Caco-2 (cell line): ENCODE measurements at regions of chr9 and their contacts with region 1.

Region 1: DNA sequence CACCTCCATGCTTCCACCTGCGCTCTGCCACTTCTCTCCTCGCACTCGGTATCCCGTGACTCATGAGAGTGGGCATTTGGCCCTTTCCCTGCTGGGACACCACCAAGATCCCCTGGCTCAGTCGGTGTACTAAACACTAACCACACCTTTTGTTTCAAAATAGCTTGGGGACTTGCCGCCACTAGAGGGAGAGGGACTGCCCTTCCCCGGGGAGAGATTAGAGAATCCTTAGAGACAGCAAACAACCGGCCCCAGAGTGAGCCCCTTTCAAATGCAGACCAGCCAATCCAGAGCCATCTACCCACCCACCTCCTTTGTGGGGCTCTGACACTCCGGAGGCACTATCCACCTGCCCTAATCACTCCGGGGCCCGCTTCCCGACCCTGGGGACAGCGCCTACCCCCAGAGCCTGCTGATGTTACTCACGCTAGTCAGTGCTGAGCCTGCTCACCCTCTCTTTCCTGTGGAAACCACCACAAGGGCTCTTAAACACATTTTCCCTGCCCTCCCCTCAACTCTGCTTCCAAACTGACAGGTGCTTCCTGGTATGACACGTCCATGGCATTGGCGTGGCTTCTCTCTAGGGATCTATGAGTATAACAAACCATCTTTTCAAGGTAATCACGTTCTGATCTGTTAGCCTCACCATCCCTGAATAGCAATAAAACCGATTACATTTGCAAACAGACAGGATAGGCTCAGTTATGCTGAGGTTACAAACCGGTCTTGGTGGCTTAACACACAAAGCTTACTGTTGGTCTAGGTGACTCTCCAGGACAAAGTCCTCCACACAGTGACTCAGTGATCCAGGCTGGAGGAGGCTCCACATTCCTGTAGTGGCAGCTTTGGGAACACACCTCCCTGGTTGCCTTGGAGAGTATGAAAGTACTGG is 180.1 kb upstream of the MVB12B start:
- DNase-seq: peak; percentile 89 to 93
- H3K4me3 ChIP-seq: peak overlapping the region; percentile 28
- H3K4me3 Mint-ChIP-seq: peak overlapping the region; percentile 77
- H3K27ac Mint-ChIP-seq: peak overlapping the region; percentile 97
- H3K4me1 ChIP-seq: peaks cover 23% of the 10 kb centered on the region
- H3K4me1 Mint-ChIP-seq: peaks cover 31% of the 10 kb centered on the region
- H3K27me3 ChIP-seq: no peaks in the 10 kb centered on the region
- H3K27me3 Mint-ChIP-seq: no peaks in the 10 kb centered on the region
- CTCF ChIP-seq: peak; percentile 50 to 81

Region 2: GRCh38 chr9:125758986-125759763 is 387.3 kb before region 1 on chr9:
- CTCF ChIA-PET with region 1: no interaction called
- POLR2A ChIA-PET with region 1: no interaction called
- intact Hi-C with region 1: loop called (anchors 10 kb)
- DNase-seq: peak in 1 of 2 experiments; percentile 28
- H3K4me3 ChIP-seq: no peak overlapping the region
- H3K4me3 Mint-ChIP-seq: no peak overlapping the region
- H3K27ac Mint-ChIP-seq: no peak overlapping the region
- H3K4me1 ChIP-seq: peaks cover 9% of the 10 kb centered on the region; the same call in 1 of the 2 replicates
- H3K4me1 Mint-ChIP-seq: peaks cover 8% of the 10 kb centered on the region
- H3K27me3 ChIP-seq: no peaks in the 10 kb centered on the region
- H3K27me3 Mint-ChIP-seq: no peaks in the 10 kb centered on the region
- CTCF ChIP-seq: no peak

Region 3: DNA sequence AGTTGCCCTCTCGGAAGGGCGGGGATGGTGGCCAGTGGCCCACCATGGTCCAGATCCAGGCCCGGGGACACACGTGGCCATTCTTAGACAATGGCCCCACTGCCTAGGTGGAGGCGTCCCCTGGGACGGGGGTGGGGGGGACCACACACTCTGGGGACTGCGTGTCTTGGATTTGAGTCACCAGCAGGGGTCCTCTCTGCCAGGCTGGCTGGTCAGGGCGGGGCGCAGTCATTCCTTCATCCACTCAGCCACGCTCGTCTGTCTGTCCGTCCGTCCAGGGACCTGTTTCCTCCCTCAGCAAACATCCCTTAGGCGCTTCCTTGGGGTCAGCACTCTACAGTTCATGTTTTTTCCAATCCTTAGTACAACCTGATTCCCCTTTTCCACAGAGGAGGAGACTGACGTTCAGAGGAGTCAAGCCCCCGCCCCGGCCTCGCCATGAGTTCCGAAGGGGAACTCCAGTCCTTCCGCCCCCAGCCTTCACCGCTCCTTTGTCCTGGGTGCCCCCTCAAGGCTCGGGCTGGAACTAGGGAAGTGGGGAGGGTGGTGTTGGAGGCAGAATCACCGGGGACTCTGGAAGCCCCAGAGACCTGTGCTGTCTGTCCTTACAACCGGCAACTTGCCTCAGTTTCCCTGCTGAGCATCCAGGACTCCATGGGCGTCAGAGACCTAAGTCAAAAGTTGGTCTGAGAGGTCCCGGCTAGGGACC is 96.5 kb before region 1 on chr9:
- CTCF ChIA-PET with region 1: no interaction called
- POLR2A ChIA-PET with region 1: no interaction called
- intact Hi-C with region 1: loop called (anchors 5 kb)
- DNase-seq: no peak
- H3K4me3 ChIP-seq: no peak overlapping the region
- H3K4me3 Mint-ChIP-seq: no peak overlapping the region
- H3K27ac Mint-ChIP-seq: no peak overlapping the region
- H3K4me1 ChIP-seq: no peaks in the 10 kb centered on the region
- H3K4me1 Mint-ChIP-seq: no peaks in the 10 kb centered on the region
- H3K27me3 ChIP-seq: no peaks in the 10 kb centered on the region
- H3K27me3 Mint-ChIP-seq: no peaks in the 10 kb centered on the region
- CTCF ChIP-seq: peak; percentile 3 to 20

Region 4: GRCh38 chr9:126125177-126125972 is 21.1 kb before region 1 on chr9:
- CTCF ChIA-PET with region 1: interaction called, 6 read pairs
- POLR2A ChIA-PET with region 1: interaction called, 3 read pairs
- intact Hi-C with region 1: loop called (anchors 2 kb)
- DNase-seq: no peak
- H3K4me3 ChIP-seq: no peak overlapping the region
- H3K4me3 Mint-ChIP-seq: no peak overlapping the region
- H3K27ac Mint-ChIP-seq: no peak overlapping the region
- H3K4me1 ChIP-seq: peaks cover 51% of the 10 kb centered on the region
- H3K4me1 Mint-ChIP-seq: peaks cover 33% of the 10 kb centered on the region
- H3K27me3 ChIP-seq: no peaks in the 10 kb centered on the region
- H3K27me3 Mint-ChIP-seq: no peaks in the 10 kb centered on the region
- CTCF ChIP-seq: no peak

Region 5: DNA sequence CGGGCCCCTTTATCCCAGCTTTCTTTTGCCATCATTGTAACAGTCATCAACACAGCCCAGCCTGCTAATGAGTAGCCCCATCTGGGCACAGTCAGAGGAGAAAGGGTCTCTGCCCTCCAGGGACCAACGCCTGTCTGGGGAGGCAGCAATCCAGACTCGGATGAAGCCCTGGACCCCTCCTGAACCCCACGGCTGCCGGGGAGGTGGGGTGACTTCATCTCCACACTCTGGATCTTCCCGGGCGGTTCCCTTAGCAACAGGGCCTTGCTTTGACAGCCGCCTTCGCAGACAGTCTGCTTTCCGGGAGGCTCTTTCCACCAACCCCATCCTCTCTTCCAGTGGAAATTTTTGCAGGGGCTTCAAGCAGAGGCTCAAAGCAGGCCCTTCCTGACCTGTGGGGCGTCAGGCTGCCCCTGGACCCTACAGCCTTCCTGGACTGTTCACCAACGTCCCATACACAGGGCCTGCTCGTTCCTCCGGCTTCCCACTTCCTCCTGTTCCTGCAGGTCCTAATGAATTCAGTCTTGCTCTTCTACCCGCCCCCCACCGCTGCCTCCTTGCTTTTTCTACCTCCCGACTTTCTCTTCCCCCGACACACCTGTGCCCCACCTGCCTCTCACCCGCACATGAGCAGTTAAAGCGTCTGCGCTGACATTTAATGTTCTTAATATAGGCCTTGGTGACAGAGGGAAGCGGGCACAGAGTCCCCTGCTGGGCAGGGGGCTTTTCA is 18.5 kb after region 1 on chr9:
- CTCF ChIA-PET with region 1: no interaction called
- POLR2A ChIA-PET with region 1: no interaction called
- intact Hi-C with region 1: no loop called
- DNase-seq: no peak
- H3K4me3 ChIP-seq: no peak overlapping the region
- H3K4me3 Mint-ChIP-seq: no peak overlapping the region
- H3K27ac Mint-ChIP-seq: no peak overlapping the region
- H3K4me1 ChIP-seq: no peaks in the 10 kb centered on the region
- H3K4me1 Mint-ChIP-seq: no peaks in the 10 kb centered on the region
- H3K27me3 ChIP-seq: no peaks in the 10 kb centered on the region
- H3K27me3 Mint-ChIP-seq: peaks cover 13% of the 10 kb centered on the region
- CTCF ChIP-seq: no peak

Region 6: GRCh38 chr9:126183266-126183665 is 36.8 kb after region 1 on chr9:
- CTCF ChIA-PET with region 1: no interaction called
- POLR2A ChIA-PET with region 1: no interaction called
- intact Hi-C with region 1: no loop called
- DNase-seq: no peak
- H3K4me3 ChIP-seq: no peak overlapping the region
- H3K4me3 Mint-ChIP-seq: no peak overlapping the region
- H3K27ac Mint-ChIP-seq: no peak overlapping the region
- H3K4me1 ChIP-seq: no peaks in the 10 kb centered on the region
- H3K4me1 Mint-ChIP-seq: no peaks in the 10 kb centered on the region
- H3K27me3 ChIP-seq: no peaks in the 10 kb centered on the region; the same call in 1 of the 2 replicates
- H3K27me3 Mint-ChIP-seq: peaks cover 27% of the 10 kb centered on the region
- CTCF ChIP-seq: no peak

Region 7: GRCh38 chr9:126203126-126203712 is 56.7 kb after region 1 on chr9:
- CTCF ChIA-PET with region 1: no interaction called
- POLR2A ChIA-PET with region 1: no interaction called
- intact Hi-C with region 1: no loop called
- DNase-seq: no peak
- H3K4me3 ChIP-seq: no peak overlapping the region
- H3K4me3 Mint-ChIP-seq: no peak overlapping the region
- H3K27ac Mint-ChIP-seq: no peak overlapping the region
- H3K4me1 ChIP-seq: no peaks in the 10 kb centered on the region
- H3K4me1 Mint-ChIP-seq: no peaks in the 10 kb centered on the region
- H3K27me3 ChIP-seq: no peaks in the 10 kb centered on the region
- H3K27me3 Mint-ChIP-seq: peaks cover 3% of the 10 kb centered on the region
- CTCF ChIP-seq: peak in 1 of 2 experiments; percentile 29

Region 8: DNA sequence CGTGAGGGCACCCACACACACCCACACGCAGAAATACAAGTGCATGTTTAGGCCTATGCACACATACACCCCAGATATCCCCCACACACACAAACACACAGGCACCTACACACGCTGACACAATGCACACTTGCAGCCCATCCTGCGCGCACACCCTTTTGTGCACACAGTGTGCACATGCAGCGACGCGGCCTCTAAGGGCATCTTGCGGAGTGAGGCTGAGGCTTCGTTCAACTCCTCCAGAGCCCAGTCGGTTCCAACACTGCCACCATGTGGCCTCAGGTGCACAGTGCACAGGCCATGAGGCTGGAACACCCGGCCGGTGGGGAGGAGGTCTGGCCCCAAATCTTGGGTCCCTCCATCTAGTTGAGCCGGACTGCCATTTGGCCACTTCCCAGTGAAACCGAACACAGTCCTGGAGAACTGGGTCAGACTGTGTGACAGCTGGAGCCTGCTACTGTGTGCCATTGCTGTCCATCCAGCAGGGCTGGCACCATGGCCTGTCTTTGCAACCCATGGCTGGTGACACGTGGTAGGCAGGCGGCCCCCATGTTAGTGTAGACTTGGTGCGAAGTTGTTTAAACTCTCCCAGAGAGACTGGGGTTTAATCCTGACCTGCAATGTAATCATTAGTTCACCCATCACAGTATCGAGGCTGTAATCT is 82.4 kb after region 1 on chr9:
- CTCF ChIA-PET with region 1: interaction called, 3 read pairs
- POLR2A ChIA-PET with region 1: no interaction called
- intact Hi-C with region 1: loop called (anchors 1 kb)
- DNase-seq: peak; percentile 74 to 80
- H3K4me3 ChIP-seq: no peak overlapping the region
- H3K4me3 Mint-ChIP-seq: no peak overlapping the region
- H3K27ac Mint-ChIP-seq: no peak overlapping the region
- H3K4me1 ChIP-seq: no peaks in the 10 kb centered on the region
- H3K4me1 Mint-ChIP-seq: no peaks in the 10 kb centered on the region
- H3K27me3 ChIP-seq: no peaks in the 10 kb centered on the region; the same call in 1 of the 2 replicates
- H3K27me3 Mint-ChIP-seq: peaks cover 7% of the 10 kb centered on the region
- CTCF ChIP-seq: peak; percentile 90 to 91